ENCODE measurements at regions of chr17 and their contacts with region 1.

Region 1: GRCh38 chr17:73304971-73305812 is 6.6 kb downstream of the CDC42EP4 start:
- DNase-seq: peak; percentile 79 to 90 (median 81)
- ATAC-seq: peak; percentile 32 to 84 (median 70)
- H3K4me3 ChIP-seq: peak overlapping the region in 11 of 12 donors; percentile 2 to 49 (median 44)
- H3K27ac ChIP-seq: peak overlapping the region; percentile 69 to 100 (median 98)
- H3K4me1 ChIP-seq: peaks cover 39 to 97% (median 80%) of the 10 kb centered on the region in 12 donors
- H3K27me3 ChIP-seq: no peaks in the 10 kb centered on the region
- CTCF ChIP-seq: peak in 10 of 12 donors; percentile 10 to 62 (median 43)
- POLR2A ChIP-seq: peak in 1 of 2 donors; percentile 14

Region 2: GRCh38 chr17:73291964-73292531 is 13.1 kb before region 1 on chr17:
- intact Hi-C with region 1: loop called in 3 of 10 experiments (anchors 2 kb)
- DNase-seq: peak; percentile 77 to 92 (median 79)
- ATAC-seq: peak; percentile 73 to 83 (median 76)
- H3K4me3 ChIP-seq: peak overlapping the region in 5 of 12 donors; percentile 11 to 32 (median 23)
- H3K27ac ChIP-seq: peak overlapping the region; percentile 89 to 99 (median 96)
- H3K4me1 ChIP-seq: peaks cover 29 to 93% (median 83%) of the 10 kb centered on the region in 12 donors
- H3K27me3 ChIP-seq: no peaks in the 10 kb centered on the region
- CTCF ChIP-seq: peak in 1 of 12 donors; percentile 10
- POLR2A ChIP-seq: no peak